ENCODE measurements at regions of chr1 and their contacts with region 1.

Region 1: GRCh38 chr1:26889551-26890466 is at the start of gene GPN2:
- DNase-seq: peak; percentile 59 to 90 (median 70)
- ATAC-seq: peak; percentile 91
- H3K4me3 ChIP-seq: peak within 1 kb of the TSS; percentile 89
- H3K4me3 Mint-ChIP-seq: peak within 1 kb of the TSS; percentile 96
- H3K27ac ChIP-seq: peak within 1 kb of the TSS; percentile 87 to 89
- H3K27ac Mint-ChIP-seq: peak within 1 kb of the TSS; percentile 97
- H3K4me1 ChIP-seq: peaks cover 31% of the 10 kb centered on the region
- H3K4me1 Mint-ChIP-seq: peaks cover 39% of the 10 kb centered on the region
- H3K27me3 ChIP-seq: no peaks in the 10 kb centered on the region
- H3K27me3 Mint-ChIP-seq: no peaks in the 10 kb centered on the region
- CTCF ChIP-seq: no peak
- total RNA-seq, gene GPN2: 42.0 to 44.4 TPM

Region 2: GRCh38 chr1:26431979-26432695 is 457.7 kb before region 1 on chr1 and contains the start of gene DHDDS:
- CTCF ChIA-PET with region 1: no interaction called
- POLR2A ChIA-PET with region 1: no interaction called
- intact Hi-C with region 1: loop called in 1 of 2 experiments (anchors 5 kb)
- DNase-seq: peak; percentile 95 to 99 (median 98)
- ATAC-seq: peak; percentile 94
- H3K4me3 ChIP-seq: peak within 1 kb of the TSS; percentile 81
- H3K4me3 Mint-ChIP-seq: peak within 1 kb of the TSS; percentile 92
- H3K27ac ChIP-seq: peak within 1 kb of the TSS; percentile 36 to 77
- H3K27ac Mint-ChIP-seq: peak within 1 kb of the TSS; percentile 88
- H3K4me1 ChIP-seq: peaks cover 26% of the 10 kb centered on the region
- H3K4me1 Mint-ChIP-seq: peaks cover 23% of the 10 kb centered on the region
- H3K27me3 ChIP-seq: no peaks in the 10 kb centered on the region
- H3K27me3 Mint-ChIP-seq: no peaks in the 10 kb centered on the region
- CTCF ChIP-seq: no peak
- total RNA-seq, gene DHDDS: 26.3 to 26.8 TPM

Region 3: DNA sequence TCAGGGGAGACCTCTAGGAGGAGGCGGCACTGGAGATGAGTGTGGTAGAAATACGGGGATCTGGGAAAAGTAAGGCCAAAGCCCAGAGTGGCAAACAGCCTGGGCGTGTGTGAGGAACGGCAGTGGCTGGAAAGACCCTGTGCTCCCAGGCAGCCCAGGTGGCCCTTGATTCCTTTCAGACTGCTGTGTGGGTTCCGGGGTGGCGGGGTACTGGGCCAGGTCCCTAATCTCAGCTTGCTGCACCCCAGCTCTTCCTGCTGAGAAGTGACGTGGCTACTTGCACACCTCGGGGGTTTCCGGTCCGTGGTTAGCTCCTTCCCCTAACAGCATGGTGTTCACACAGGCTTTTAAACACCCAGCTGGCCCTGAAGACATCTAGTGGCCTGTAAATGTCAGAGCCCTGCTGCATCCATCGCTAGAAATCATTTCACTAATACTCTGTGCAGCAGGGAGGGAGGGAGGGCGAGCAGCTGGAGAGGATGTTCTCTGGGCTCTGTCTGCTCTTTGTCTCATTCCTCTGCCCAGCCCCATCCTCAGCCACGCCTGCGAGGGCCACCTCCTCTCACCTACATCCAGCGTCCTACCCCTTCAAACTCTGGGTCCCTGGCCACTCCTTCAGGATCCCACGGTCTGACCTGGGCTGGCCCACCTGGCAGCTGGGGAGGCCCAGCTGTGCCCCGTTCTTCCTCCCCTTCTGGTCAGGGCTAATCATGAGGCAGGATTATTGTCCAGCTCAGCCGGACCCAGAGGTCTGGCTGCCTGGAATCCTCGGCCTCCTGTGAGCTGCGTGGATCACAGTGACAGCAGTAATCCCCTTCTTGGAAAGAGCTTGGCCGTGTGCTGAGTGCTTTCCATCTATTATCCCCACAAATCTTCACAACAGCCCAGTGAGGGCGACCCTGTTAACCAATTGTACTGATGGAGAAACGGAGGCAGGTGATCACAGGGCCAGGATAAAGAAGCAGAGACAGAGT is 56.1 kb before region 1 on chr1:
- CTCF ChIA-PET with region 1: no interaction called
- POLR2A ChIA-PET with region 1: interaction called, 13 read pairs
- intact Hi-C with region 1: no loop called
- DNase-seq: peak; percentile 76 to 99 (median 86)
- ATAC-seq: peak; percentile 94
- H3K4me3 ChIP-seq: peak overlapping the region; percentile 32
- H3K4me3 Mint-ChIP-seq: peak overlapping the region; percentile 86
- H3K27ac ChIP-seq: peak overlapping the region; percentile 96 to 97
- H3K27ac Mint-ChIP-seq: peak overlapping the region; percentile 100
- H3K4me1 ChIP-seq: peaks cover 75% of the 10 kb centered on the region
- H3K4me1 Mint-ChIP-seq: peaks cover 75% of the 10 kb centered on the region
- H3K27me3 ChIP-seq: no peaks in the 10 kb centered on the region
- H3K27me3 Mint-ChIP-seq: no peaks in the 10 kb centered on the region
- CTCF ChIP-seq: peak; percentile 33

Region 4: GRCh38 chr1:26900001-26900814 is 10.4 kb after region 1 on chr1 and contains the start of gene GPATCH3:
- CTCF ChIA-PET with region 1: interaction called, 4 read pairs
- POLR2A ChIA-PET with region 1: interaction called, 82 read pairs
- intact Hi-C with region 1: no loop called
- DNase-seq: peak; percentile 78 to 95 (median 86)
- ATAC-seq: peak; percentile 94
- H3K4me3 ChIP-seq: peak within 1 kb of the TSS; percentile 98
- H3K4me3 Mint-ChIP-seq: peak within 1 kb of the TSS; percentile 98
- H3K27ac ChIP-seq: peak within 1 kb of the TSS; percentile 82 to 94
- H3K27ac Mint-ChIP-seq: peak within 1 kb of the TSS; percentile 93
- H3K4me1 ChIP-seq: peaks cover 29% of the 10 kb centered on the region
- H3K4me1 Mint-ChIP-seq: peaks cover 31% of the 10 kb centered on the region
- H3K27me3 ChIP-seq: no peaks in the 10 kb centered on the region
- H3K27me3 Mint-ChIP-seq: no peaks in the 10 kb centered on the region
- CTCF ChIP-seq: no peak
- total RNA-seq, gene GPATCH3: 30.2 to 32.4 TPM

Region 5: GRCh38 chr1:26921540-26922430 is 32.0 kb after region 1 on chr1 and contains the start of gene NUDC:
- CTCF ChIA-PET with region 1: interaction called, 4 read pairs
- POLR2A ChIA-PET with region 1: interaction called, 12 read pairs
- intact Hi-C with region 1: loop called in 1 of 2 experiments (anchors 1 kb)
- DNase-seq: peak; percentile 91 to 98 (median 93)
- ATAC-seq: peak; percentile 94
- H3K4me3 ChIP-seq: peak within 1 kb of the TSS; percentile 74
- H3K4me3 Mint-ChIP-seq: peak within 1 kb of the TSS; percentile 91
- H3K27ac ChIP-seq: peak within 1 kb of the TSS; percentile 83 to 85
- H3K27ac Mint-ChIP-seq: peak within 1 kb of the TSS; percentile 90
- H3K4me1 ChIP-seq: peaks cover 28% of the 10 kb centered on the region
- H3K4me1 Mint-ChIP-seq: peaks cover 37% of the 10 kb centered on the region
- H3K27me3 ChIP-seq: no peaks in the 10 kb centered on the region
- H3K27me3 Mint-ChIP-seq: no peaks in the 10 kb centered on the region
- CTCF ChIP-seq: no peak
- total RNA-seq, gene NUDC: 43.0 to 44.6 TPM

Region 6: DNA sequence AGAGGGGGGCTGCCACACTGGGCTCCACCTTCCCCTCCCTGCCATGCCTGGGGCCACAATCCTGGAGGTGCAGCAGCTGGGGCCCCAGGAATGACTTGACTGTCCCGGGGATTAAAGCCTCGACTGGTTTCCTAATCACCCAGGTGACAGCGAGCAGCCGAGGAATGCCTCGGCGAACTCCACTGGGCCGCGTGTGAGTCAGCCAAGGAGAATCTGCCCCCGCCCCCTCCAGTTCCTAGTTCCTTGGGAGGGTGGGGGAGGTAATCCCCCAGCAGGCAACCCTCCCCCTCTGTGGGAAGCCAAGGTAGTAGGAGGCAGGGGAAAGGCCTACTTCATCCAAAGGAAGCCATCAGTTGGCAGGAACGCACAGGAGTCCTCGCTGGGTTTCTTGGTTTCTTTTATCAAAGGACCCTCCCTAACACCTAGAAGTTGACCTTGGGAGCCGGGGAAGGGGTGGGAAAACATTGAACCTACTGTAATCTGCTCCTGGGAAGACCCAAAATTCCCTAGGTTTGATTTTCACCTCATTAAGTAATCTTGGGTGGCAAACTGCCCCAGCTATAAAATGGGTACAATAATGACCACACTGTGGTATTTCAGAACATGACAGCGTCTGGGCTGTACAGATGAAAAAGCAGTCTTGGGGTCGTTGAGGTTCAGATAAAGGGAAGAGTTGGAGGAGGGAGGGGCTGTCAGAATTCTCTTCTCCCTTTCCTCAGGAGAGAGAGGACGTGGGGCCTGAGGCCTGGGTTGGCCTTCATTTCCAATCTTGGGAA is 121.4 kb after region 1 on chr1:
- CTCF ChIA-PET with region 1: no interaction called
- POLR2A ChIA-PET with region 1: no interaction called
- intact Hi-C with region 1: no loop called
- DNase-seq: no peak
- ATAC-seq: no peak
- H3K4me3 ChIP-seq: no peak overlapping the region
- H3K4me3 Mint-ChIP-seq: no peak overlapping the region
- H3K27ac ChIP-seq: no peak overlapping the region
- H3K27ac Mint-ChIP-seq: no peak overlapping the region
- H3K4me1 ChIP-seq: peaks cover 15% of the 10 kb centered on the region
- H3K4me1 Mint-ChIP-seq: peaks cover 5% of the 10 kb centered on the region
- H3K27me3 ChIP-seq: peaks cover 18 to 29% of the 10 kb centered on the region in 2 experiments
- H3K27me3 Mint-ChIP-seq: peaks cover 44% of the 10 kb centered on the region
- CTCF ChIP-seq: no peak

Region 7: GRCh38 chr1:28886731-28887418 is 1997.1 kb after region 1 on chr1:
- CTCF ChIA-PET with region 1: no interaction called
- POLR2A ChIA-PET with region 1: no interaction called
- intact Hi-C with region 1: no loop called
- DNase-seq: peak; percentile 81 to 95 (median 89)
- ATAC-seq: peak; percentile 73
- H3K4me3 ChIP-seq: peak overlapping the region; percentile 99
- H3K4me3 Mint-ChIP-seq: peak overlapping the region; percentile 95
- H3K27ac ChIP-seq: peak overlapping the region; percentile 57 to 76
- H3K27ac Mint-ChIP-seq: peak overlapping the region; percentile 84
- H3K4me1 ChIP-seq: peaks cover 68% of the 10 kb centered on the region
- H3K4me1 Mint-ChIP-seq: peaks cover 51% of the 10 kb centered on the region
- H3K27me3 ChIP-seq: no peaks in the 10 kb centered on the region
- H3K27me3 Mint-ChIP-seq: peaks cover 5% of the 10 kb centered on the region
- CTCF ChIP-seq: no peak